ENCODE measurements at regions of chr10 and their contacts with region 1.

Region 1: GRCh38 chr10:69262292-69262751 is 16.0 kb upstream of the HK1 start:
- DNase-seq: no peak
- H3K4me3 ChIP-seq: no peak overlapping the region
- H3K27ac ChIP-seq: no peak overlapping the region
- H3K4me1 ChIP-seq: no peaks in the 10 kb centered on the region
- H3K27me3 ChIP-seq: no peaks in the 10 kb centered on the region
- CTCF ChIP-seq: no peak

Region 2: DNA sequence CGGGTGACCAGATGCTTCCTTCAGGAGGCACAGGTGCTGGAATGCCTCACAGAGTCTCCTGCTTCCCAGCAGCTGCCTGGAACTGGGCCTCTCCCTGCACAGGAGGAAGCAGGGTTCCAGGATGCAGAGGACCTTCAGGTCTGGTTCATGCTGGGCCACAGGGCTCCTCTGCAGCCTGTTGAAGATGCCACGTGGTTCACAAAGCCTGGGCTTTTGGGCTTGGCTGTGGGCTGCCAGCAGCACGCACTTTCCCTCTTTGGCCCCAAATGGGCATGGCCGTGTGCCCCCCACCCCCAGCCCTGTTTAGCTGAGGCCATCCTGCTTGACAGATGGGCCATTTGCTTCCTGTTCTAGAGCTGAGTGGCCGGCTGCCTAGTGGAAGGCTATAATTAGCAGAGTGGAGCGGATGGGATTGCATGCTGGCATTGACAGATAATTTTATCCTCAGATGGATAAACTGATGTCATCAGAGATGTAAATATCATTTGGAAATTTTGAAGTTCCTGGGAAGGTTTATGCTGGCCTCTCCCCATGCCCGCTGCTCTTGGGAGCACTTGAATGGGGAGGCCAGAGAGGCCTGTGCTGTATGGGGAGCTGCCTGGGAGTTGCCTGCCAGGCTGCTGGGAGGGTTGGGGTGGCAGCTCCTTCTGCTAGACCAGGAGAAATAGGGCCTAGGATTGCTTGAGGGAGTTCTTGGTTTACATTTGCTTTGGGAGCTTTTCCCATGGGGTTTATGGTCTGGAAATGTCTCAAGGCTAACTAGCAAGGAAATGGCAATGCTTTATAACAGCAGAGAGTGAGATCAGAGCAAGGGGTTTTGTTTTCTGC is 217.1 kb after region 1 on chr10:
- CTCF ChIA-PET with region 1: no interaction called
- dilution Hi-C with region 1: loop called (anchors 5 kb)
- in situ Hi-C with region 1: no loop called
- intact Hi-C with region 1: no loop called
- DNase-seq: no peak
- H3K4me3 ChIP-seq: no peak overlapping the region
- H3K27ac ChIP-seq: no peak overlapping the region
- H3K4me1 ChIP-seq: no peaks in the 10 kb centered on the region
- H3K27me3 ChIP-seq: no peaks in the 10 kb centered on the region
- CTCF ChIP-seq: no peak

Region 3: GRCh38 chr10:69624245-69624786 is 362.0 kb after region 1 on chr10:
- CTCF ChIA-PET with region 1: no interaction called
- dilution Hi-C with region 1: no loop called
- in situ Hi-C with region 1: loop called in 1 of 2 experiments (anchors 25 kb)
- intact Hi-C with region 1: no loop called
- DNase-seq: no peak
- H3K4me3 ChIP-seq: no peak overlapping the region
- H3K27ac ChIP-seq: no peak overlapping the region
- H3K4me1 ChIP-seq: no peaks in the 10 kb centered on the region
- H3K27me3 ChIP-seq: no peaks in the 10 kb centered on the region
- CTCF ChIP-seq: no peak

Measured in mammary epithelial cell (primary cell).